ENCODE measurements at regions of chr6 and their contacts with region 1.

Region 1: DNA sequence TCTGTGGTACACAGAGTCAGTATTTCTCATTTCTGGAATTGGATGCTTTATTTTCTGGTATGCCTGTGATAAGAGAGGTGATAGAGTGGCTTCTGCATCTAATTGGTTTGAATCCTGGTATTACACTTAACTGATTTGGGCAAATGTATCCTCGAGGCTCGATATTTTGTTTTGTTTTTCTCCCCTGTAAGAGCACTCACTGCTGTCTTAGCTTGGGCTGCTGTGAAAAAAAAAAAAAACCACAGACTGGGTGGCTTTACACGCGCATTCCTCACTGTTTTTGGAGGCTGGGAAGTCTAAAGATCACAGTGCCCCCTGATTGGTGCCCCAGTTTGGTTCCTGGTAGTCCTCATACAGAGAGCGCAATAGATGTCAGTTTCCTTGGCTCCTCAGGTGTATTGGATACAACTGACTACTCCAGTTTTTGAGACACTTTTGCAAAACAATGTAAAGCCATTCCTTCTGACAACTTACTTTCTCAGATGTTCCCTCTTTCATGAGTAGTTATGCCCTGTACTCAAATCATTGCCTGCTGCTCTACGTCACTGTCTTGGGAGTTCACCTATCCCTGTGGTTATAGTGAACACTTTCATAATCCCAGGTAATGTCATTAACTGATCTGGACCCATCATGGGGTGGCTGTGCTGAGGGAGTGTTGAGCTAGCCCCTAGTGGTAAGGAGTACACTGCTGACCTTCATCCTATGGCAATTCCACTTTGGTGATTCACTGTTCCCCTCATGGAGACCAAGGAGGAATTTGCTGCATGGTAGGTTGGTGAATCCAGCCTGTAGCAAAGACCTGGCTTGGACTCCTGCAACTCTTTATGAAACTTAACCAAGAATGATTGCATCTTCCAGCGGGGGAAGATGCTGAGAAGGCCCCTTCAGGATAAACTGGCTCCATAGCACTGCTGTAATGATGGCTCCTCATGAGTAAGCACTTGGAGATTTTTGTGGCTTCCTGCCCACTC is 3.5 kb upstream of the ACAT2 start:
- DNase-seq: no peak
- H3K4me3 ChIP-seq: no peak overlapping the region
- H3K27ac ChIP-seq: peak overlapping the region in 2 of 5 donors; percentile 13 to 15
- H3K4me1 ChIP-seq: peaks cover 7 to 36% (median 23%) of the 10 kb centered on the region in 4 donors
- H3K27me3 ChIP-seq: no peaks in the 10 kb centered on the region
- CTCF ChIP-seq: no peak
- EP300 ChIP-seq: no peak
- POLR2A ChIP-seq: no peak

Region 2: DNA sequence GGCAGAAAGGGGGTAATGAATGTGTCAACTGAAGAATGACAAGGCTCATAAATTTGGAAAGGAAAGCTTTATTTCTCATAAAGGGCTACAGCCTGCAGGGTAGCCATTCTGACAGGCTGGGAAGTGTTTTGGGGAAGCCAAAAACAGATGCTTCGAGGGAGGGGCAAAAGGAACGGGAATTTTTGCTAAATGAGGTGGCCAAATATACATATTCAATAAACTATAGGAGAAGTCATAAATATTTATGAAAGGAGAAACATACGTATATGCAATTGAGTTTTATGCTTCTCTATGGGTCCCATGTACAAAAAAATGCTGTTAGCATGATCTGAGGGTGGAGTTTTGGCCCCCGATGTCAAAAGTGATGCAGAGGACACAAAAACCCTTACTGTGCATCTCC is 408.4 kb before region 1 on chr6:
- intact Hi-C with region 1: no loop called
- DNase-seq: no peak
- H3K4me3 ChIP-seq: no peak overlapping the region
- H3K27ac ChIP-seq: no peak overlapping the region
- H3K4me1 ChIP-seq: no peaks in the 10 kb centered on the region
- H3K27me3 ChIP-seq: no peaks in the 10 kb centered on the region
- CTCF ChIP-seq: no peak
- EP300 ChIP-seq: no peak
- POLR2A ChIP-seq: no peak

Region 3: GRCh38 chr6:159679091-159680077 is 78.9 kb before region 1 on chr6:
- intact Hi-C with region 1: loop called (anchors 10 kb)
- DNase-seq: no peak
- H3K4me3 ChIP-seq: no peak overlapping the region
- H3K27ac ChIP-seq: peak overlapping the region in 4 of 5 donors; percentile 13 to 57 (median 54)
- H3K4me1 ChIP-seq: peaks cover 0 to 61% (median 36%) of the 10 kb centered on the region in 4 donors
- H3K27me3 ChIP-seq: no peaks in the 10 kb centered on the region
- CTCF ChIP-seq: no peak
- EP300 ChIP-seq: no peak
- POLR2A ChIP-seq: no peak